ENCODE measurements at regions of chr2 and their contacts with region 1.

Region 1: GRCh38 chr2:217785544-217786045 is 217.2 kb downstream of the TNS1 start:
- DNase-seq: peak in 4 of 5 donors; percentile 53 to 65 (median 59)
- H3K4me3 ChIP-seq: no peak overlapping the region
- H3K4me3 Mint-ChIP-seq: peak overlapping the region in 3 of 8 donors; percentile 24 to 43 (median 40)
- H3K27ac ChIP-seq: no peak overlapping the region
- H3K27ac Mint-ChIP-seq: peak overlapping the region in 3 of 7 donors; percentile 5 to 64 (median 52)
- H3K4me1 ChIP-seq: peaks cover 21% of the 10 kb centered on the region
- H3K4me1 Mint-ChIP-seq: peaks cover 13 to 37% (median 28%) of the 10 kb centered on the region in 4 donors
- H3K27me3 ChIP-seq: no peaks in the 10 kb centered on the region
- H3K27me3 Mint-ChIP-seq: no peaks in the 10 kb centered on the region

Region 2: DNA sequence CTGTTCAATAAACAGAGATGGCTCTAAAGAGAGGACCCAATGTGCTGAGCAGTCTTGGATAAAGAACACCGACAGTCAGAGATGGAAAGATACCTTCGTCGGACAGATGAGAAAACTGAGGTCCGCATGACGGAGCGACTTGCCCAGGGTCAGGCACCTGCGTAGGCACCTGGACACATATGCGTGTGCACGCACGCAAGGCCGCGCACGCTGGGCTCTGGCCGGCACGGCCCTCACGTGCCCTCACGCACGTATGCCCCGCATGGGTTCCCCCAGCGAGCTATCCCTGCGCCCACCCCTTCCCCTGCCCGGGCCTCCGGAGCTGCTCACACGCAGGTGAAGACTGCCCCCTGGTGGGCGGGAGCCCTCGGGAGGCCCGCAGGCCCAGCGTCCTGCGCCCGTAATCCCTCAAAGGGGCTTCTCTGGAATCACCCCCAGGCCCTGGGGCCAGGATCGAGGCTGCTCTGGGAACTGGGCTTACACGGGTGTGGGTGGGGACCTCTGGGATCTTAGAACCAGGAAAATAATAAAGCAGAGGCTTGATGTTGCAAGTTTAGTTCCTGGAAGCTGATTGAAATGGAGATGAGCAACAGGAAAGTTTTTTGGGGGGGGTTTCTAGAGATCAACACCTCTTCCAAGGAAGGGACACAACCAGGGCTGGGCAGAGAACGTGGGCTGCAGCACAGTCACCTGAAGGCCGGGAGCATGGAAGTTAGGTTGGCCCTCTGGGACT is 29.1 kb before region 1 on chr2:
- CTCF ChIA-PET with region 1: interaction called, 16 read pairs
- POLR2A ChIA-PET with region 1: no interaction called
- intact Hi-C with region 1: no loop called
- DNase-seq: peak; percentile 43 to 54 (median 48)
- H3K4me3 ChIP-seq: no peak overlapping the region
- H3K4me3 Mint-ChIP-seq: peak overlapping the region; percentile 29 to 72 (median 52)
- H3K27ac ChIP-seq: no peak overlapping the region
- H3K27ac Mint-ChIP-seq: no peak overlapping the region
- H3K4me1 ChIP-seq: peaks cover 19% of the 10 kb centered on the region
- H3K4me1 Mint-ChIP-seq: peaks cover 13 to 29% (median 24%) of the 10 kb centered on the region in 4 donors
- H3K27me3 ChIP-seq: no peaks in the 10 kb centered on the region
- H3K27me3 Mint-ChIP-seq: peaks cover 0 to 6% of the 10 kb centered on the region in 2 donors

Region 3: GRCh38 chr2:217880287-217880889 is 94.8 kb after region 1 on chr2:
- CTCF ChIA-PET with region 1: interaction called, 84 read pairs
- POLR2A ChIA-PET with region 1: no interaction called
- intact Hi-C with region 1: no loop called
- DNase-seq: no peak
- H3K4me3 ChIP-seq: no peak overlapping the region
- H3K4me3 Mint-ChIP-seq: no peak overlapping the region
- H3K27ac ChIP-seq: no peak overlapping the region
- H3K27ac Mint-ChIP-seq: no peak overlapping the region
- H3K4me1 ChIP-seq: no peaks in the 10 kb centered on the region
- H3K4me1 Mint-ChIP-seq: no peaks in the 10 kb centered on the region
- H3K27me3 ChIP-seq: no peaks in the 10 kb centered on the region
- H3K27me3 Mint-ChIP-seq: peaks cover 4 to 6% of the 10 kb centered on the region in 2 donors

Region 4: DNA sequence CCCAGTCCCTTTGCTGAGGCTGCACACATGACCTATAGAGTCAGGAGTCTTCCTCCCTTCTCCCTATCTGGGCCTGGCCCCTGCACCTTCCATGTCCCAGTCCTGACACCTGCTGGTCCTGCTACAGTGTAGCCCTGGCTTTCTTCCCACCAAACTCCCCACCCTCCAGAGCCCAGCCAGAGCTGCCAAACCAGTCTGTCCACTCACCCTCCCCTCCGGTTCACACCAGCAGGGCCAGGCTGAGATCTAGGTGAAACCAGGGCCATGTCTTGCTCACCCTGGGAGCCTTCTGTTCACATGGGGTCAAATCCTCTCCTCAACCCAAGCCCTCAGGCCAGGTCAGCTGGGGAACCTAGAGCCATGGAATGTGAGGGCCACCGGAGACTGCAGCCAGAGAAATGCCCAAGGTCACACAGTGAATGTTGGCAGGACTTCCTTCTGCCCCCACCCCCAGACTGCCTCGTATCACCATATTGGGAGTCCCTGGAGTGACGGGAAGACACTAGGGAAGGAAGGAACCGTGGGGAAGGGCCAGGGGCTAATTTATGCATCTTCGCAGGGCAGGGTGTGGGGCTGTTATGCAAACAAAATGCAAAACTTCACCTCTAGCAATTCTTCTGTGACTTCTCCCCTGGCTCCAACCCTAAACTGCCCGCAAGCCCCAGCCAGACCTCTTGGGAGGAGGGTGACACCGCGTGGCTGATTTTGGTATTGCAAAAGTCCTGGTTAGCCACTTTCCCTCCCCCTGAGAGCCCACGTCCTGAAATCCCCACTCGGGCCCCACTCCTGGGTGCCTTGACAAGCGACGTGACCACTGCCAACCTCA is 202.6 kb after region 1 on chr2:
- CTCF ChIA-PET with region 1: interaction called, 17 read pairs
- POLR2A ChIA-PET with region 1: no interaction called
- intact Hi-C with region 1: loop called (anchors 1 kb)
- DNase-seq: peak in 4 of 5 donors; percentile 10 to 32 (median 26)
- H3K4me3 ChIP-seq: no peak overlapping the region
- H3K4me3 Mint-ChIP-seq: no peak overlapping the region
- H3K27ac ChIP-seq: no peak overlapping the region
- H3K27ac Mint-ChIP-seq: no peak overlapping the region
- H3K4me1 ChIP-seq: no peaks in the 10 kb centered on the region
- H3K4me1 Mint-ChIP-seq: peaks cover 0 to 3% (median 0%) of the 10 kb centered on the region in 4 donors
- H3K27me3 ChIP-seq: no peaks in the 10 kb centered on the region
- H3K27me3 Mint-ChIP-seq: peaks cover 2 to 3% of the 10 kb centered on the region in 2 donors

Region 5: GRCh38 chr2:218033590-218034496 is 248.2 kb after region 1 on chr2:
- CTCF ChIA-PET with region 1: interaction called, 18 read pairs
- POLR2A ChIA-PET with region 1: no interaction called
- intact Hi-C with region 1: loop called (anchors 1 kb)
- DNase-seq: peak in 1 of 5 donors; percentile 9
- H3K4me3 ChIP-seq: peak overlapping the region in 1 of 2 donors; percentile 63
- H3K4me3 Mint-ChIP-seq: peak overlapping the region; percentile 34 to 85 (median 78)
- H3K27ac ChIP-seq: no peak overlapping the region
- H3K27ac Mint-ChIP-seq: peak overlapping the region in 5 of 7 donors; percentile 24 to 85 (median 52)
- H3K4me1 ChIP-seq: peaks cover 14% of the 10 kb centered on the region
- H3K4me1 Mint-ChIP-seq: peaks cover 4 to 11% (median 6%) of the 10 kb centered on the region in 4 donors
- H3K27me3 ChIP-seq: no peaks in the 10 kb centered on the region
- H3K27me3 Mint-ChIP-seq: peaks cover 2 to 3% of the 10 kb centered on the region in 2 donors

Measured in CD4-positive, alpha-beta memory T cell (primary cell).